Left cardiac atrium (tissue), 4 donors: ENCODE measurements at regions of chr1 and their contacts with region 1.

Region 1: DNA sequence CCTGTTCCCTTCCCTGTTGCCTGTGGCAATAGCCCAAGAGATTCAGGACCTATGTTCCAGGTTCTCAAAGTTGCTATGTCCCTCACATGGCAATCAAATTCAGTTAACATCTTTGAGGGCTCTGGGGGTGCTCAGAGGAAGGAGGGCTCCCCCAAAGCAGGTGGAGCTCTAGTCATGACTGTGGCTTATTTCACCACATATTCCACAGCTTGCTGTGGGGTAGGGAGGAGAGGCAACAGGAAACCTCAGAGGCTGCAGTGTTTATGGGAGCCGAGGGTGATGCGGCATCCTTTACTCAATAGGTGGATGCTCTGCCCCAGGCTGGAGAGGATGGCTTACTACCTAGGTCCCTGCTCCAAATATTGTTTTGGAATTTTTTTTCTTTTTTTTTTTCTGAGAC is 1.2 kb upstream of the MKNK1 start:
- DNase-seq: no peak
- ATAC-seq: no peak

Region 2: GRCh38 chr1:46340404-46341221 is 264.6 kb before region 1 on chr1 and contains the start of gene NSUN4:
- intact Hi-C with region 1: no loop called
- DNase-seq: peak; percentile 94
- ATAC-seq: peak; percentile 96
- total RNA-seq, gene NSUN4: 13.4 to 17.4 TPM

Region 3: DNA sequence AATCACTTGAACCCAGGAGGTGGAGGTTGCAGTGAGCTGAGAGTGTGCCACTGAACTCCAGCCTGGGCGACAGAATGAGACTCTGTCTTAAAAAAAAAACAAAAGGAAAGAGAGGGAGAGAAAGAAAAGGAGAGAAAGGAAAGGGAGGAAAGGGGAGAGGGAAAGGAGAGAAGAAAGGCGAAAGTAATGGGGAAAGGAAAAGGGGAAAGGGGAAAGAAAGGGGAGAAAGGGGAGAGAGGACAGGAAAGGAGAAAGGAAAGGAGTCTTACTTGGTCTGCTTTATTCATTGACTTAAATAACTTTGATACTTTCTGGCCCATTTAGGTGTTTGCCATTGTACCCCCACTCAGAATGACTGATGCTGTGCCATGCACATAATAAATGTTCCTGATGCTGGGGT is 252.9 kb before region 1 on chr1:
- intact Hi-C with region 1: no loop called
- DNase-seq: no peak
- ATAC-seq: no peak

Region 4: DNA sequence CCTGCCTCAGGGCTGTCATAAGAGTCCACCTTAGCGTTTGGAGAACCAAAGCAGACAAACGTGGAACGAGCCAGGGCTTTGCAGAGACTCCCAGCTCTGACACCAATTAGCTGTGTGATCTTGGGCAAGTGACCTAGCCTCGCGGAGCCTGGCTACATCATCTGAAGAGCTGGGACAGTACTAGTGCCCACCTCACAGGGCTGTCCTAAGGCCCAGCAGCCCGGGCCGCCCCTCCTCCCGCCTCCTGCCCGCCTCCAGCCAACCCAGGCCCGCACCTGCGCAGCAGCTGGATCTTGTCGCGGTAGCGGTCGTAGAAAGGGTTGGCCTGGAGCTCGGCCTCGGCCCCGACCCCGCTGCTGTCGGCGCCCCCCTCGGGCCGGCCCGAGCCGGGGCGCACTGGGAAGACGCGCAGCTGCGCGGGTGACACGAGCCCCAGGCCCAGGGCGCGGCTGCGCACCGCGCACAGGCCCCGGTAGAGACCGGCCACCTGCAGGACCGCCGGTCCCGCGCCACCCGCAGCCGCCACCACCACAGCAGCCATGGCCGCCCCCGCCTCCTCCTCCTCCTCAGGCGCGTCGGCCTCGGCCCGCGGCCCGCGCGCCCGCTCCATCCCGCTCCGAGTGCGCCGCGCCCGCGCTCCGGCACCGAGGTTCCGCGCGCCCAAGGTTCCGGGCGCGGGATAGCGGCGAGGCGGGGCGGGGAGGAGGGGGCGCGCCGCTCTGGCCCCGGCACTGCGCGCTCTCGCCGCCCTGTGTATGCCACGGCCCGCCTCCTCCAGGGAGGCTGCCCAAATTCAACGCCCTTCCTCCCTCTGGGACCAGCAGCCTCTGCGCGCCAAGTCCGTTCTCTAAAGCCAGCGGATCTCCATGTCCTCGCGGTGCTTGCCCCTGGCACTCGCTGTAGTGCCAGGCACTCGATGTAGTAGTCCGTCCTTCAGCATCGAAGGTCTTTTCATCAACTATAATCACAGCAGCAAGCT is 62.8 kb after region 1 on chr1 and contains the start of gene ATPAF1:
- intact Hi-C with region 1: loop called in 1 of 2 experiments (anchors 5 kb)
- DNase-seq: peak; percentile 86
- ATAC-seq: peak; percentile 95
- total RNA-seq, gene ATPAF1: 134 to 137 TPM

Region 5: GRCh38 chr1:47036764-47037163 is 431.5 kb after region 1 on chr1:
- intact Hi-C with region 1: no loop called
- DNase-seq: no peak
- ATAC-seq: no peak